ENCODE measurements at regions of chr1 and their contacts with region 1.

Region 1: DNA sequence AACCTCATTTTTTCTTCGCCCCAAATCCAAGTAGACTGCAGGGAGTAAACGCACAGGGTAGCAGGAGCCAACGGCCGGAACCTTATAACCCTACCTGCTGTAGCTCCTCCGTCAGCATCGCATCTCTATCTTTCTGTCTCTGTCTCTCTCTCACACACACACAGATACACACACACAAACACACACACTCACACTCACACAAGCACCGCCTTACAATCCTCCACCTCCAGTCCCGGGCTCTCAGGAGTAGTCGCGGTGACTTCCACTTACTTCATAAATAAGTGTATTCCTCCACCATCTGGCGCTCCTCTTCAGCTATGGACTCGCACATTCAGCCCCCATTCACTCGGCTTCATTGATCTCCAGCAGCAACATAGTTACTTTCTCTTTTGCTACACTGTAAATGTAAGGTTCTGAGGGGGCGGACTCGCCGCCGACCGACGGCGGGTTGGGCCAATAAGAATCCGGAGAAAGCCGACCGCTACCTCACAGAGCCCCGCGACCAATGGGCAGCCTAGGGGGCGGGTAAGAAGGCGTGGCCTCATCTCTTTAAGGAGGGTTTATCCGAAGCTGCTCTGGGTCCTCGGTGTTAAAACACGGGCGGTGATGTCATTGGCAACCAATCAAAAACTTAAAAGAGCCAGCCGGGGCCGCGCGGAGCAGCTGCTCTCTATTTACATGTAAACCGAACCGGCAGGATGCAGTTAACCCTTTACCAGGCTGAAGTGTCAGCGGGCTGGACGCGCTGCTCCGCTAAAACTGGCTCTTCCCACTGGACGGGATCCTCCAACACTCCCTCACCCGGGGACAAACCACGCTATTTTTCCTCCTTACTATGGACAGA is at the start of gene DUSP10:
- DNase-seq: peak; percentile 100
- H3K4me3 ChIP-seq: peak within 1 kb of the TSS; percentile 79 to 100 (median 99)
- H3K27ac ChIP-seq: peak within 1 kb of the TSS; percentile 98
- H3K4me1 ChIP-seq: peaks cover 15 to 61% (median 45%) of the 10 kb centered on the region in 4 experiments
- H3K27me3 ChIP-seq: no peaks in the 10 kb centered on the region

Region 2: DNA sequence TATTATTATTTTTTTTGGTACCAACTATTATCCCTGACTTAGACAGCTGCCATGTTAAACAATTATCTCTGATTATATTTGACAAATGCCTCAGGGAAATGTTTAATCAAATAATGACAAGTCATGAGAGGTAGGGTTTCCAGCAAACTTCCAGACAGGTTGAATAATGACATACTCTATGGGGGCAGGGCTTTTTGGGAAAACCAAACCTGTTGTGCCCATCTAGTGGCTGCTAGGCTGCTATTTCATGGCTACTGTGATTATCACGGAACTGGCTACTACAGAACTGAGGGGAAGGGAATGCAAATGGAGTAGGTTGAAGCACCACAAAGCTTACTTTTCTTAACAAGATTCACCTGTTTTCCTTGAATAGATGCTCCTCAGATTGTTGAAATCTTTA is 77.7 kb before region 1 on chr1:
- CTCF ChIA-PET with region 1: no interaction called
- POLR2A ChIA-PET with region 1: no interaction called
- DNase-seq: no peak
- H3K4me3 ChIP-seq: no peak overlapping the region
- H3K27ac ChIP-seq: no peak overlapping the region
- H3K4me1 ChIP-seq: peaks cover 0 to 6% (median 5%) of the 10 kb centered on the region in 4 experiments
- H3K27me3 ChIP-seq: no peaks in the 10 kb centered on the region

Region 3: GRCh38 chr1:221697923-221698425 is 44.0 kb before region 1 on chr1:
- CTCF ChIA-PET with region 1: interaction called, 14 read pairs
- POLR2A ChIA-PET with region 1: interaction called, 5 read pairs
- DNase-seq: no peak
- H3K4me3 ChIP-seq: no peak overlapping the region
- H3K27ac ChIP-seq: no peak overlapping the region
- H3K4me1 ChIP-seq: peaks cover 0 to 26% (median 7%) of the 10 kb centered on the region in 4 experiments
- H3K27me3 ChIP-seq: no peaks in the 10 kb centered on the region

Region 4: DNA sequence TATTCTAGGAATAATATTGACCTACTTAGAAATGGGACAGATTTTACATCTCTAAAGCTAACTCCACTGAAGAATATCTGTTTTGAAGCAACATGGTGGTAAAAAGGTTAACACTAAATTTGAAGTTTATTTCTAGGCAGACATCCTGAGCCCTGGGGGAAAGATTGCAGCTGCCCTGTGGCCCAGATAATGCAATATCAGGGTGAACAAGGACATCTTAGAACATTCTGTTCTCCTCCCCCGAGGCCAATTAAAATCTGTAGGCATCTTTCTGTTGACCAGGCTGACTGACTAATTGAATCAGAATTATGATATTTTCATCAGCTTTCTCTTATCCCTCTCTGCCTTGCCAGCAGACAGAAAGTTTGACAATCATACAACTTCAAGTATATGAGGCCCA is 149.8 kb after region 1 on chr1:
- CTCF ChIA-PET with region 1: interaction called, 10 read pairs
- POLR2A ChIA-PET with region 1: interaction called, 4 read pairs
- DNase-seq: no peak
- H3K4me3 ChIP-seq: no peak overlapping the region
- H3K27ac ChIP-seq: no peak overlapping the region
- H3K4me1 ChIP-seq: no peaks in the 10 kb centered on the region
- H3K27me3 ChIP-seq: no peaks in the 10 kb centered on the region